K562 (cell line): ENCODE measurements at regions of chr6 and their contacts with region 1.

Region 1: DNA sequence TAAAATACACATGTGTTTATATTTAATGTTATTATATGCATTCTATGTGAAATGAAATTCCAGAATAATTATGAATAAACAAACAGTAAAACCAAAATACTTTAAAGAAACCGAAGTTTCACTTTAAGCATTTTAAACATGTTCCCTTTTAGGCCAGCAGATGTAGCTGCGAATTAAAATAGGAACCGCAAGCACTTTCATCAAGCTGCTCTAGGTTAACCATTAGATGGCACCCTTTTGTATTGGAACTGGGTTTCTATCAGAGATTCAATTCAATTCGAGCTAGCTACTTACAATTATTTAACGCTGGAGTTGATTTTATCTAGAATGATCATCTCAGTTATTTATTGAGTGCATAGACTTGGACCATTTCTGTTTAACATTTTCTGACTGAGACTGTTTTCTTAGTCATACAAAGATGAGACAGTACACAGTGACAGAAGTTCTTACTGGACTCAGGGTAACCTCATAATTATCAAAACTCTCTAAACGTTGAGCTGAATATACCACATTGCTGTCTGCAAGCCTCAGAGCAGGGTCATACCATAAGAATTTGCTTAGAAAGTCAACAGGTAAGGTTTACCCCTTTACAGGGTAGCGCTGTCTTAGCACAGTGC is 8.5 kb downstream of the TMEM242 start:
- DNase-seq: peak; percentile 35 to 79 (median 58)
- ATAC-seq: peak; percentile 84
- H3K4me3 ChIP-seq: no peak overlapping the region
- H3K27ac ChIP-seq: no peak overlapping the region
- H3K4me1 ChIP-seq: peaks cover 21 to 24% of the 10 kb centered on the region in 2 experiments; a peak in 4 of 5 replicates
- H3K27me3 ChIP-seq: no peaks in the 10 kb centered on the region
- CTCF ChIP-seq: peak; percentile 92 to 100 (median 99)
- EP300 ChIP-seq: no peak
- POLR2A ChIP-seq: no peak
- RAD21 ChIP-seq: peak; percentile 100

Region 2: GRCh38 chr6:156464100-156464878 is 850.5 kb before region 1 on chr6:
- CTCF ChIA-PET with region 1: no interaction called
- POLR2A ChIA-PET with region 1: no interaction called
- in situ Hi-C with region 1: no loop called
- intact Hi-C with region 1: no loop called
- DNase-seq: no peak
- ATAC-seq: no peak
- H3K4me3 ChIP-seq: no peak overlapping the region
- H3K27ac ChIP-seq: no peak overlapping the region
- H3K4me1 ChIP-seq: no peaks in the 10 kb centered on the region
- H3K27me3 ChIP-seq: peaks cover 0 to 3% of the 10 kb centered on the region in 2 experiments; a peak in 2 of 5 replicates
- CTCF ChIP-seq: no peak
- EP300 ChIP-seq: no peak
- POLR2A ChIP-seq: no peak
- RAD21 ChIP-seq: no peak

Region 3: DNA sequence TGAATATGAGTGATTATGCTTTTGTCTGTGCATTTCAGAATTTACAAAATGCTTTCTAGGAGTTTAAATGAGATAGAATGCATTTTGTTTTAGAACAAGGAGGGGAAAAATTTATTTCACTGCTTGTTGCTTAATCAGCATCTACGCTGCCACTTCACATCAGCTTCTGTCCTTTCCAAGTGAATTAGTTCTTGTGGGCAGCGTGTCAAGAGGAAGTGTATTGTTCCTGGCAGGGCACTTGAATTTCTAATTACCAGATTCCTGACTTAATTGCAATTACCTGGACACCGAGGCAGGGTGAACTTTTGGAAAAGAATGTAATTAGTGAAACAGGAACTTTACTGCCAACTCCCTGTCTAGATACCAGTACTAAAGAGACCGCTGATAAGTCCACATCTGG is 255.0 kb before region 1 on chr6:
- CTCF ChIA-PET with region 1: no interaction called
- POLR2A ChIA-PET with region 1: no interaction called
- in situ Hi-C with region 1: no loop called
- intact Hi-C with region 1: no loop called
- DNase-seq: no peak
- ATAC-seq: no peak
- H3K4me3 ChIP-seq: no peak overlapping the region
- H3K27ac ChIP-seq: no peak overlapping the region
- H3K4me1 ChIP-seq: peaks cover 0 to 13% of the 10 kb centered on the region in 2 experiments; a peak in 3 of 5 replicates
- H3K27me3 ChIP-seq: no peaks in the 10 kb centered on the region
- CTCF ChIP-seq: no peak
- EP300 ChIP-seq: no peak
- POLR2A ChIP-seq: no peak
- RAD21 ChIP-seq: no peak

Region 4: DNA sequence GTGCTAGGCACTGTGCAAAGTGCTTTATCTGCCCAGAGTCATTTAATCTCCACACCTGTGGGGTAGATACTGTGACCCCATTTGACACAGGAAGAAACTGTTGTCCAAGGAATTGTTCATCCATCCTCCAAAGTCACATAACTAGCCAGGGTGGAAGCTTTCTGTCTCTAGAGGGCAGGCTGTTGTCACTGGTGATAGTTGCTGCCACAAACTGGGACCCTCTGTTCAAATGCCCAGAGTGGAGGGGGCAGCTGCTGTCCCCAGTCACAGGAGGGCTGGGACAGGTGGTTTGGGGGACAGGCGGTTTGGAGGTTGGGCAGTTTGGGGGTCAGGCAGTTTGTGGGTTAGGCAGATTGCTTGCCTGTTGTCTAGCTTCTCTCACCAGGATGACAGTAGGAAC is 24.6 kb after region 1 on chr6:
- CTCF ChIA-PET with region 1: interaction called, 8 read pairs
- POLR2A ChIA-PET with region 1: no interaction called
- in situ Hi-C with region 1: no loop called
- intact Hi-C with region 1: loop called (anchors 1 kb)
- DNase-seq: no peak
- ATAC-seq: peak; percentile 39; the same call in 2 of the 3 replicates
- H3K4me3 ChIP-seq: no peak overlapping the region
- H3K27ac ChIP-seq: no peak overlapping the region
- H3K4me1 ChIP-seq: peaks cover 0 to 3% of the 10 kb centered on the region in 2 experiments; a peak in 3 of 5 replicates
- H3K27me3 ChIP-seq: peaks cover 0 to 4% of the 10 kb centered on the region in 2 experiments; a peak in 3 of 5 replicates
- CTCF ChIP-seq: peak; percentile 23 to 34 (median 31); a peak in 4 of 6 replicates
- EP300 ChIP-seq: no peak
- POLR2A ChIP-seq: no peak
- RAD21 ChIP-seq: peak in 1 of 2 experiments; percentile 68; a peak in 2 of 4 replicates

Region 5: GRCh38 chr6:157461000-157461915 is 146.4 kb after region 1 on chr6:
- CTCF ChIA-PET with region 1: no interaction called
- POLR2A ChIA-PET with region 1: no interaction called
- in situ Hi-C with region 1: no loop called
- intact Hi-C with region 1: loop called (anchors 5 kb)
- DNase-seq: peak; percentile 76 to 90 (median 82)
- ATAC-seq: peak; percentile 85
- H3K4me3 ChIP-seq: no peak overlapping the region
- H3K27ac ChIP-seq: peak overlapping the region; percentile 54; the same call in 2 of the 3 replicates
- H3K4me1 ChIP-seq: peaks cover 51 to 66% of the 10 kb centered on the region in 2 experiments
- H3K27me3 ChIP-seq: no peaks in the 10 kb centered on the region
- CTCF ChIP-seq: peak; percentile 84 to 98 (median 91)
- EP300 ChIP-seq: peak; percentile 52; the same call in 1 of the 2 replicates
- POLR2A ChIP-seq: no peak
- RAD21 ChIP-seq: peak; percentile 67 to 79

Region 6: DNA sequence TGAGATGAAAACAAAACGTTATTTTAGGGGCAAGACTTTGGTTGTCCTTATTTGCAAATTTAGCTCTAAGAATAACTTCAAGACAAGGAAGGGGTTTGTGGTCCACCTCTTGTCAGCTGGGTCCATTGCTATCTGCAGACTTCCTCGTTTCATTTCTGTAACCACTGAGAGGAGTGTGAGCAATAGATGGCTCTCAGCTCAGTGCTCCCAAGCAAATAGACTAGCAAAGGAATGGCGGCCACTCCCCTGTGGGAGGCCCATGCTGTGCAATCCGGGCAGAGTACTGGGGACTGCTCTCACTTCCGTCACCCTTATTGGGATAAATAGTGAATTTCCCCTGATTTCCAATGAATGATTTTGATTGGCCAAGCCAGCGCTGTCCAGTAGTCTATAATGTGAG is 242.7 kb after region 1 on chr6:
- CTCF ChIA-PET with region 1: interaction called, 20 read pairs
- POLR2A ChIA-PET with region 1: no interaction called
- in situ Hi-C with region 1: no loop called
- intact Hi-C with region 1: no loop called
- DNase-seq: no peak
- ATAC-seq: peak; percentile 35; the same call in 1 of the 3 replicates
- H3K4me3 ChIP-seq: no peak overlapping the region
- H3K27ac ChIP-seq: no peak overlapping the region
- H3K4me1 ChIP-seq: peaks cover 0 to 10% of the 10 kb centered on the region in 2 experiments; a peak in 1 of 5 replicates
- H3K27me3 ChIP-seq: no peaks in the 10 kb centered on the region
- CTCF ChIP-seq: no peak
- EP300 ChIP-seq: no peak
- POLR2A ChIP-seq: no peak
- RAD21 ChIP-seq: no peak

Region 7: GRCh38 chr6:157667211-157668008 is 352.6 kb after region 1 on chr6:
- CTCF ChIA-PET with region 1: interaction called, 56 read pairs
- POLR2A ChIA-PET with region 1: no interaction called
- in situ Hi-C with region 1: no loop called
- intact Hi-C with region 1: loop called (anchors 1 kb)
- DNase-seq: peak; percentile 82 to 83 (median 82)
- ATAC-seq: peak; percentile 95
- H3K4me3 ChIP-seq: no peak overlapping the region
- H3K27ac ChIP-seq: no peak overlapping the region
- H3K4me1 ChIP-seq: peaks cover 2 to 4% of the 10 kb centered on the region in 2 experiments; a peak in 1 of 5 replicates
- H3K27me3 ChIP-seq: no peaks in the 10 kb centered on the region
- CTCF ChIP-seq: peak; percentile 89 to 93 (median 91)
- EP300 ChIP-seq: no peak
- POLR2A ChIP-seq: no peak
- RAD21 ChIP-seq: peak; percentile 91 to 93

Region 8: DNA sequence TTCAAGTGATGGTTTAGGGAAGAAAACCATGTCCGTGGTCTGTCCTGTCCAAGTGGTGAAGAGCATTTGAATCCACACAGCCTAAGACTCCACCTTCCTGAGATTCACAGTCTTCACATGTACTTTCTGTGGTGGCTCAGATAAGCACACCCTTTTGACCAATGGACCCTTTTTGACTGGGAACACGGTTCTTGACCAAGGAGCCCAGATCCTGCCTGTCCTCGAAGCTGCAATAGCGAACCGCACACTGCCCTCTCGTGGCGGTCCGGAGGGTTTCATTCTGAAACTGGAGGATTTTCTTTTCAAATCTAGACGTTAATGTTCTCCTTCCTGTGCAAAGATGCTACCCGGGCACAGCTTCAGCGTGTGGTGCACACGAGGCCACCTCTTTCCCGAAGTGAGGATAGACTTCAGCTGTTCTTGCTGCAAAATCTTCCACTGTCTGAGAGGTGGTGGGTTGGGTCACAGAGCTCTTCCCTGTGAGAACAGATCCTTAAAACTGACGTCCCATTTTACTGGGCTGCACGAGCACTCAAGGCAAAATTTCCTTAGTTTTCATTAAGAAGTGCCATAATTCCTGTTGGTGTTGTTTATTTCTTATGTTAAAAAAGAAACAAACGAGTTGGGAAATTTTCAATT is 757.4 kb after region 1 on chr6:
- CTCF ChIA-PET with region 1: interaction called, 8 read pairs
- POLR2A ChIA-PET with region 1: no interaction called
- in situ Hi-C with region 1: no loop called
- intact Hi-C with region 1: loop called (anchors 1 kb)
- DNase-seq: peak; percentile 84 to 87 (median 86)
- ATAC-seq: peak; percentile 95
- H3K4me3 ChIP-seq: no peak overlapping the region
- H3K27ac ChIP-seq: no peak overlapping the region; the same call in 2 of the 3 replicates
- H3K4me1 ChIP-seq: peaks cover 4 to 15% of the 10 kb centered on the region in 2 experiments; a peak in 4 of 5 replicates
- H3K27me3 ChIP-seq: no peaks in the 10 kb centered on the region
- CTCF ChIP-seq: peak; percentile 86 to 98 (median 96)
- EP300 ChIP-seq: peak; percentile 48; the same call in 1 of the 2 replicates
- POLR2A ChIP-seq: no peak
- RAD21 ChIP-seq: peak; percentile 96 to 98